ENCODE measurements at regions of chr3 and their contacts with region 1.

Region 1: GRCh38 chr3:176872771-176873209 is 324.5 kb downstream of the TBL1XR1 start:
- DNase-seq: no peak
- H3K4me3 ChIP-seq: no peak overlapping the region
- CTCF ChIP-seq: peak; percentile 83

Region 2: DNA sequence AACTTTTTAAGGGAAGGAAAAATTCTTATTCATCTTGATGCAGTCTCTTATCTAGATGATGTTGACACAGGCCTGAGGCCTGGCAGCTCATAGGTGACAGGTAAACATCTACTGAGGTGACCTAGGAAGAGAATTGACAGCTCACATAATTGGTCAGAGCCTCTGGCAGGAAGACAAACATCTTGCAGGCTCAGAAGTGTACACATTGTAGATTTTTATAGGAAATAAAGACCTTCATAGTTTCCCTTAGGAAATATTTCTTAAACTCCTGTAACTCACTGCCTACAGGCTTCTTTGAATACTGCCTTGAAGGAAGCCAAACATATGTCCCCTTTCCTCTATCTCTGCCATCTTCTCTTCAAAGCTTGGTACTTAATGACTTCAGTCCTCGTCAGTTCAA is 16.8 kb before region 1 on chr3:
- CTCF ChIA-PET with region 1: interaction called, 27 read pairs
- POLR2A ChIA-PET with region 1: no interaction called
- DNase-seq: no peak
- H3K4me3 ChIP-seq: no peak overlapping the region
- CTCF ChIP-seq: no peak

Region 3: DNA sequence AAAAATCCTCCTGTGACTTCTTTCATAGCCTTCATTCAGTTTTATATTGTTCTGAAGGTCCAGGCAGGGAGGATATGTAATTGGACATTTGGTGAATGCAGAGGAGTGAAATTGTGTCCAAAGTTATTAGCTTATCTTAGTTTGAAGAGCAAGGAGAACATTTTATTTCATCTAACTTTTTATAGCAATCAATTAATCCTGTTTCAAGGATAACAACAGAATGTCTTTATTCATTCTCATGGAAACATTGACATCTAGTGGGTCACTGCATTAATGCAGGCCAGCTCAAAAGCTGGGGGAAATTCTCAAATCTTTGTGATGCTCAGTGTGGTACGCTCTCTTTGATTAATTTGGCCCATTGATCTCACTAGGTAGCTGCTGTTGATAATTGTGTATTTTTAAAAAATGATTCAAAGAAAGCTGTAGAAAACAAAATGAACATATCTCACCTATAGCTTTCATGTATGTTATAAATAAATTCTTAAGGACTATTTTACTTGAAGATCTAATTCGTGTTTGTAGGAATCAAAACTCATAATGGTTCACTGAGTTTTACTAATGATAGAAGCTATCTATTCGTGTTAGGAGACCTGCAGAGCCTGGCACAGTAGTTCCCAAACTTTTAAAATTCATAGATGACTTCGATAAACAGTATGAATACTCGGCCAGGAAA is 1512.6 kb after region 1 on chr3:
- CTCF ChIA-PET with region 1: interaction called, 39 read pairs
- POLR2A ChIA-PET with region 1: no interaction called
- DNase-seq: no peak
- H3K4me3 ChIP-seq: no peak overlapping the region
- CTCF ChIP-seq: peak; percentile 50

Measured in AG04449 (cell line).